HCT116 (cell line): ENCODE measurements at regions of chr3 and their contacts with region 1.

Region 1: DNA sequence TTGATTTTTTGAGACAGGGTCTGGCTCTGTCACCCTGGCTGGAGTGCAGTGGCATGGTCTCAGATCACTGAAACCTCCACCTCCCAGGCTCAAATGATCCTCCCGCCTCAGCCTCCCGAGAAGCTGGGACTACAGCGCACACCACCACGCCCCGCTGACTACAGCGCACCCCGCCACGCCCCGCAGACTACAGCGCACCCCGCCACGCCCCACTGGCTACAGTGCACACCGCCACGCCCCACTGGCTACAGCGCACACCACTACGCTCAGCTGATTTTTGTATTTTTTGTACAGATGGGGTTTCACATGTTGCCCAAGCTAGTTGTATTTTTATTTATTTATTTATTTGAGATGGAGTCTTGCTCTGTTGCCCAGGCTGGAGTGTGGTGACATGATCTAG is 35.6 kb downstream of the SLC51A start:
- DNase-seq: no peak
- ATAC-seq: no peak
- H3K4me3 ChIP-seq: no peak overlapping the region
- H3K27ac ChIP-seq: no peak overlapping the region
- H3K4me1 ChIP-seq: no peaks in the 10 kb centered on the region
- H3K27me3 ChIP-seq: no peaks in the 10 kb centered on the region
- CTCF ChIP-seq: no peak
- POLR2A ChIP-seq: no peak
- RAD21 ChIP-seq: no peak

Region 2: GRCh38 chr3:196440041-196440537 is 188.2 kb after region 1 on chr3:
- CTCF ChIA-PET with region 1: no interaction called
- POLR2A ChIA-PET with region 1: no interaction called
- RAD21 ChIA-PET with region 1: no interaction called
- intact Hi-C with region 1: loop called (anchors 1 kb)
- DNase-seq: no peak
- ATAC-seq: no peak
- H3K4me3 ChIP-seq: no peak overlapping the region
- H3K27ac ChIP-seq: no peak overlapping the region
- H3K4me1 ChIP-seq: no peaks in the 10 kb centered on the region
- H3K27me3 ChIP-seq: no peaks in the 10 kb centered on the region
- CTCF ChIP-seq: no peak
- POLR2A ChIP-seq: no peak
- RAD21 ChIP-seq: no peak